HepG2 (cell line): ENCODE measurements at regions of chr19 and their contacts with region 1.

Region 1: GRCh38 chr19:17605761-17606745 is 50.6 kb downstream of the COLGALT1 start:
- DNase-seq: peak; percentile 80
- ATAC-seq: peak; percentile 88
- H3K4me3 ChIP-seq: peak overlapping the region; percentile 27 to 68 (median 59); a peak in 5 of 6 replicates
- H3K27ac ChIP-seq: peak overlapping the region; percentile 76
- H3K4me1 ChIP-seq: peaks cover 44% of the 10 kb centered on the region
- H3K27me3 ChIP-seq: peaks cover 3 to 28% of the 10 kb centered on the region in 2 experiments; a peak in 3 of 5 replicates
- CTCF ChIP-seq: peak; percentile 70
- EP300 ChIP-seq: no peak
- POLR2A ChIP-seq: peak; percentile 61 to 84
- RAD21 ChIP-seq: peak; percentile 87

Region 2: DNA sequence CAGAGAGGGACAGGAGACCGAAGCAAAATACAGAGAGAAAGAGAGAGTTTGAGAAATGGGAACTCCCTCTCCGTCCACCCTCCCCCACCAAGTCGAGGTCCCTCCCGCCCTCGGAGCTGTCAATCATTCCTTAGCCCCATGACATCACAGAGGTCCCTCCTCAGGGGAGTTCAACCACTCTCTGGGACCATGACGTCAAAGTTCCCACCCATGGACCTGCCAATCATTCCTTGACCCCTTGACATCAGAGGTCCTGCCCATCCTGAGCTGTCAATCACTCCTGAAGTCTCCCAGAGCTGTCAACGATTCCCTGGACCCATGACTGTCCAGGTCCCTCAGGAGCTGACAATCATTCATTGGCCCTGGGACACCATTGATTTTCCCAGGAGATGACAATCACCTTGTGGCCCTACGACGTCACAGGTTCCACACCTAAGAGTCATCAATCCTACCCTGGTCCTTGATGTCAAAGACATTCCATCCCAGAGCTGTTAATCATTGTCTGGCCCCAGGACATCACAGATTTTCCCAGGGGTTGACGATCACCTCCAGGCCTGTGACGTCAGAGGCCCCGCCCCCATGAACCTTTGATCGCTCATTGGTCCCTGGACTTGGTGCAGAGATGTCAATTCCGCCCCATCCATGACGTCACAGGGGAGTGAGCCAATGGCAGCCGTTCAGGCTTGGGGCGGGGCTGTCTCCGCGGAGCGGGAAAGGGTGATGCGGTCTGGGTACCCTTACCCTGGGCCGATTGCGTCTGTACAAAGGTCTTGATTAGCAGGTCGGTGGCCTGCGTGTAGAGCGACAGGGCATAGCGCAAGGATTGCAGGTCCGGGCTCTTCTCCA is 11.1 kb after region 1 on chr19:
- CTCF ChIA-PET with region 1: no interaction called
- POLR2A ChIA-PET with region 1: interaction called, 11 read pairs
- in situ Hi-C with region 1: no loop called
- intact Hi-C with region 1: no loop called
- DNase-seq: peak; percentile 44
- ATAC-seq: peak; percentile 41
- H3K4me3 ChIP-seq: peak overlapping the region in 2 of 3 experiments; percentile 4 to 60; a peak in 3 of 6 replicates
- H3K27ac ChIP-seq: no peak overlapping the region
- H3K4me1 ChIP-seq: peaks cover 18% of the 10 kb centered on the region
- H3K27me3 ChIP-seq: no peaks in the 10 kb centered on the region; a peak in 1 of 5 replicates
- CTCF ChIP-seq: no peak
- EP300 ChIP-seq: no peak
- POLR2A ChIP-seq: no peak
- RAD21 ChIP-seq: no peak

Region 3: DNA sequence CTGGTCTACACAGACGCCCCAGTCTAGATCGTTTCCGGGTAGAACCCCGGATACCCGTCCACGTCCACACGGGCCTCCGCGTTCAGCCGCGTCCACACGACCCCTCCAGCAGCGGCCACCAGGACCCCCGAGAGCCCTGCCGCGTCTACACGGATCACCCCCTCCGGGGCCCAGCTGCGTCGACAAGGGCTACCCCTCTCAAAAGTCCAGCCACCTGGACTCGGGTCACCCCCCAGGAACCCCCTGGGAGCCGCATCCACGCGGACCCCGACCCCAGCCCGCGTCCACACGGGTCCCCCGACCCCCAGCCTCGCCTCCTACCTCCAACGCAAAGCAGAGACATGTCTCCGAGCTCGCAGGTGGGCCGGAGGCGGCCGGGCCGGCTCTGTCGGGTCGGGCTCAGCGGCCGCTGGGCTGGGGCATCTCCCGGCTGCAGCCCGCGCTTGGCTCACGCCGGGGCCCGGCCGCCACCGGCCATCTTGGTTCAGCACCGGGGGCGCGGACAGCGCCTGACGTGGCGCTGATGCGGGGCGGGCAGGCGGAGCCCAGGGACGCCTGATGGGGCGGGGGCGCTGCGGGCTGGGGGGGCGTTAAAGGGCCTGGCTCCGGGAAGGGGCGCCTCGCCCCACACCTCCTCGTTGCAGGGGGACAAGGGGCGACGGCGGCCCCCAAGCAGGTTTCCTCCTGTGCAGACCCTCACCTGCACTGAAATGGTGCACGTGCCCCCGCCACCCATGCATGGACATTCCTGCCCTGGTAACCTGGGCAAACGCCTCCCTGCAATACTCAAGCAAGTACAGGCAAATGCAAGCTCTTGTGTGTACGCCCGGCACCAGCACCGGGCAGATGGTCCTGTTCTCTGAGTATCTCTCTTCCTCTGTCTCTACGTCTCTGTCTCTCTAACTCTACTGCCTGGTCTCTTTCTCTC is 82.1 kb after region 1 on chr19 and contains the start of gene UNC13A:
- CTCF ChIA-PET with region 1: no interaction called
- POLR2A ChIA-PET with region 1: no interaction called
- in situ Hi-C with region 1: no loop called
- intact Hi-C with region 1: no loop called
- DNase-seq: no peak
- ATAC-seq: peak; percentile 86
- H3K4me3 ChIP-seq: no peak within 1 kb of the TSS; a peak in 1 of 6 replicates
- H3K27ac ChIP-seq: no peak within 1 kb of the TSS
- H3K4me1 ChIP-seq: no peaks in the 10 kb centered on the region
- H3K27me3 ChIP-seq: peaks cover 0 to 18% of the 10 kb centered on the region in 2 experiments; a peak in 4 of 5 replicates
- CTCF ChIP-seq: no peak
- EP300 ChIP-seq: no peak
- POLR2A ChIP-seq: no peak
- RAD21 ChIP-seq: no peak
- total RNA-seq, gene UNC13A: 0.07 and 0.11 TPM in 2 replicates